K562 (cell line): ENCODE measurements at regions of chr3 and their contacts with region 1.

Region 1: GRCh38 chr3:38136777-38137614 is at the start of gene ACAA1:
- DNase-seq: peak; percentile 99 to 100 (median 99)
- ATAC-seq: peak; percentile 95
- H3K4me3 ChIP-seq: peak within 1 kb of the TSS; percentile 90
- H3K27ac ChIP-seq: peak within 1 kb of the TSS; percentile 83
- H3K4me1 ChIP-seq: peaks cover 18 to 33% of the 10 kb centered on the region in 2 experiments; a peak in 4 of 5 replicates
- H3K27me3 ChIP-seq: no peaks in the 10 kb centered on the region; a peak in 1 of 5 replicates
- CTCF ChIP-seq: no peak
- EP300 ChIP-seq: no peak
- POLR2A ChIP-seq: peak; percentile 94
- RAD21 ChIP-seq: no peak
- polyA plus RNA-seq, gene ACAA1: 4.0 to 7.9 TPM

Region 2: DNA sequence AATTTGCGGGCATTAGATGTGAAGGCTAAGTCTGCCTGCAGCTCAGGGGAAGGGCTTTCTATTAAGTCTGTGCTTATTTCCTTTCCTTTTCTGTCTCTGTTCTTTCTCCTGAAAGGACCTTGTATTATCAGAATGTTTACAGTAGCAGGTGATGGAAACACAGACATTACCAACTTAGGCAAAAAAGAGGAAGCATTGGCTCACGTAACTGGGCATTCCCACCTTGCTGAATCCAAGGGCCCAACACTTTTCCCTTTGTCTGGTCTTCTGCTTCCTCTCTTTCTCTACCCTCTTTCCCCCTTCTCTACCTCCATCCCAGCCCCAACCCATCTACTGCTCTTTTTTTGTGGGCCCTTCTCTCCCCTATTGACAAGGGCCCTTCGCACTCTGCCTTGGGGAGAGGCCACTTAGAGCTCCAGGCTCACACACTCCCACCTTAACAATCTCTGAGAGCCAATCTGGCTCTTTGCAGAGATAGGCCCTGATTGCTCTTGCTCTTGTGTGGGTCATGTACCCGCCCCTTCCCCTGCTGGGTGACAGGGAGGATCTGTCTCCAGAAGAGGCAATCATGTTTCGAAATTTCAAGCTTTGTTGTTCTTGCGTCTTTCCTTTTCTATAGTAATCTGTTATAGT is 35.1 kb before region 1 on chr3:
- CTCF ChIA-PET with region 1: no interaction called
- POLR2A ChIA-PET with region 1: no interaction called
- in situ Hi-C with region 1: no loop called
- intact Hi-C with region 1: no loop called
- DNase-seq: no peak
- ATAC-seq: no peak; the same call in 2 of the 3 replicates
- H3K4me3 ChIP-seq: no peak overlapping the region
- H3K27ac ChIP-seq: no peak overlapping the region
- H3K4me1 ChIP-seq: no peaks in the 10 kb centered on the region
- H3K27me3 ChIP-seq: peaks cover 38 to 42% of the 10 kb centered on the region in 2 experiments
- CTCF ChIP-seq: no peak
- EP300 ChIP-seq: no peak
- POLR2A ChIP-seq: no peak
- RAD21 ChIP-seq: no peak

Region 3: DNA sequence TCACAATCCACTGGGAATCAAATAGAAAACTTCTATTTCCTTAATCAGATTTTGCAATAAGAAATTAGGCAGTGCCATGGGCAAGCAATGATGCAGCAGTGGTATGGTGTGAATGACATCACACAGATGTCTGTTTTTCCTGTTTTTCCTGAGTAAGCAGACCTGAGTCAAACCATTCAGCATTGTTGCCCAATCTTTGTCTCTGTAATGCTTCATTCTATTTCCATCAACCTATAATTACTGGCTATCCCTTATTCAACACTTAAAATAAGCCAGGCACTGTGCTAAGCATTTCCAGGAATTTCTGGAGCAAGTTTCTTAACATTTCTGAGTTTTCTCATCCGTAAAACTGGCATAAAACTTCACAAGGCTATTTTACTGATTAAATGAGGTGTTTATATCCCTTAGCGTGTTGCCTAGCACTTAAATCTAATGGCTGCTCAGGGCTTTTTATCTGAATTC is 17.1 kb after region 1 on chr3:
- CTCF ChIA-PET with region 1: no interaction called
- POLR2A ChIA-PET with region 1: interaction called, 14 read pairs
- in situ Hi-C with region 1: no loop called
- intact Hi-C with region 1: no loop called
- DNase-seq: no peak
- ATAC-seq: no peak
- H3K4me3 ChIP-seq: no peak overlapping the region
- H3K27ac ChIP-seq: no peak overlapping the region
- H3K4me1 ChIP-seq: peaks cover 9 to 32% of the 10 kb centered on the region in 2 experiments
- H3K27me3 ChIP-seq: no peaks in the 10 kb centered on the region
- CTCF ChIP-seq: no peak
- EP300 ChIP-seq: no peak
- POLR2A ChIP-seq: no peak
- RAD21 ChIP-seq: no peak

Region 4: DNA sequence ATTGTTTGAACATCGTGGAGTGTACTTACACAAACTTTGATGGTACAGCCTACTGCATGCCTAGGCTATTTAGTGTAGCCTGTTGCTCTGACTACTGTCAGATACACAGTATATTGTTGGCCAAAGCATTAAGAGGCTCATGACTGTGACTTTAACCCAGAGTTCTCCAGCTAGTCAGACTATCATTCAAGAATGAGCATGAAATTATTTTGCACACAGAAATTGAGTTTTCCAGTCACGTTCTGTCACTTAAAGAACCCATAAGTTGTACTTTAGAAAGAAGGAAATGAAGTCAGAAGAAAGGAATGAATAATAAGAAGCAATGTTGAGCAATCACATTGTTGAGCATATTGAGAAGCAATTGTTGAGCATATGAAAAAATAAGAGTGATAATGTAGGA is 91.0 kb after region 1 on chr3:
- CTCF ChIA-PET with region 1: no interaction called
- POLR2A ChIA-PET with region 1: no interaction called
- in situ Hi-C with region 1: no loop called
- intact Hi-C with region 1: loop called (anchors 10 kb)
- DNase-seq: no peak
- ATAC-seq: peak; percentile 46; the same call in 1 of the 3 replicates
- H3K4me3 ChIP-seq: no peak overlapping the region
- H3K27ac ChIP-seq: no peak overlapping the region
- H3K4me1 ChIP-seq: no peaks in the 10 kb centered on the region; a peak in 1 of 5 replicates
- H3K27me3 ChIP-seq: no peaks in the 10 kb centered on the region
- CTCF ChIP-seq: no peak
- EP300 ChIP-seq: no peak
- POLR2A ChIP-seq: no peak
- RAD21 ChIP-seq: no peak

Region 5: DNA sequence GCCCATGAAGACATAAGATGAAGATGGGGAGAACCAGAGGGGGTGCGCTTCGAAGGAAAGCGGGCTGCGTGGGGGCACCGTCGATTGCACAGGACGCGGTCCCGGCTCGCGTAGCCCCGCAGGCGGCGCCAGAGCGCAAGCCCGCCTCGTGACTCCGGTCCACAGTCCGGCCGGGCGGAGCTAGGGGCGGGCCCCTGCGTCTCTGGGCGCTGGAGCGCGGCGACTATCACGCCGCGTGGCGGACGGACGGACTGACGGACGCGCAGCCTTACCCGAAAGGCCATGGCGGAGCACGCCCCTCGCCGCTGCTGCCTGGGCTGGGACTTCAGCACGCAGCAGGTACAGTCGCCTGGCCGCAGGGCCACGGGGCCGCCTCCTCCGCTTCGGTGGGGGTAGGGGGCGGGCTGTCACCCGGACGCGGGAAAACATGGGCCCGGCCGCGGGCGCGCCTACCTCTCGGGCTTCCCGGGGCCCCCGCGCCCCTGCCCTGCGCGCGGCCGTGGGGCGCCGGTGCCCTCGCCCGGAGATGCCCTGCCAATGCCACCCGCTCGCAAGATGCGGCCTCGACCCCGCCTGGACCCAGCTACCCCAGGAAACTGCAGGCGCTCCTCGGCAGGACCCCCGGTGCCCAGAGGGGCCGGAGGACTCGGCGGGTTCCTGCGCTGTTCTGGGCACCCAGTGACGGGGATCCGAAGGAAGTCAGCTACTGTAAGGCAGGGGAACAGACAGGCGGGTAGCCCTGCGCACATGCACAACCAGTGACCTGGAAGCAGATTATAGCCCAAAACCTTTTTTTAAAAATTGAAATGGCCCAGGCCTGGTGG is 209.8 kb after region 1 on chr3 and contains the start of gene XYLB:
- CTCF ChIA-PET with region 1: no interaction called
- POLR2A ChIA-PET with region 1: no interaction called
- in situ Hi-C with region 1: loop called (anchors 10 kb)
- intact Hi-C with region 1: loop called (anchors 5 kb)
- DNase-seq: peak; percentile 96 to 97 (median 96)
- ATAC-seq: peak; percentile 96
- H3K4me3 ChIP-seq: peak within 1 kb of the TSS; percentile 98
- H3K27ac ChIP-seq: peak within 1 kb of the TSS; percentile 89
- H3K4me1 ChIP-seq: peaks cover 18 to 27% of the 10 kb centered on the region in 2 experiments; a peak in 4 of 5 replicates
- H3K27me3 ChIP-seq: no peaks in the 10 kb centered on the region
- CTCF ChIP-seq: peak; percentile 91 to 94 (median 93)
- EP300 ChIP-seq: no peak
- POLR2A ChIP-seq: peak; percentile 83
- RAD21 ChIP-seq: peak; percentile 77 to 82
- polyA plus RNA-seq, gene XYLB: 4.0 to 6.1 TPM

Region 6: GRCh38 chr3:38651154-38651789 is 514.3 kb after region 1 on chr3:
- CTCF ChIA-PET with region 1: no interaction called
- POLR2A ChIA-PET with region 1: interaction called, 3 read pairs
- in situ Hi-C with region 1: no loop called
- intact Hi-C with region 1: loop called (anchors 10 kb)
- DNase-seq: peak; percentile 78 to 86 (median 84)
- ATAC-seq: peak; percentile 76
- H3K4me3 ChIP-seq: no peak overlapping the region
- H3K27ac ChIP-seq: no peak overlapping the region
- H3K4me1 ChIP-seq: peaks cover 6 to 18% of the 10 kb centered on the region in 2 experiments
- H3K27me3 ChIP-seq: peaks cover 14 to 34% of the 10 kb centered on the region in 2 experiments; a peak in 4 of 5 replicates
- CTCF ChIP-seq: peak; percentile 95 to 99 (median 97)
- EP300 ChIP-seq: no peak
- POLR2A ChIP-seq: no peak
- RAD21 ChIP-seq: peak; percentile 66 to 82